Heart right ventricle (tissue), 16 donors: ENCODE measurements at regions of chr1 and their contacts with region 1.

Region 1: GRCh38 chr1:63868268-63868781 is 94.5 kb downstream of the ROR1 start:
- DNase-seq: no peak
- ATAC-seq: peak in 5 of 8 donors; percentile 40 to 65 (median 54)
- H3K4me3 ChIP-seq: no peak overlapping the region
- H3K27ac ChIP-seq: peak overlapping the region in 2 of 10 donors; percentile 2 to 18
- H3K4me1 ChIP-seq: peaks cover 0 to 55% (median 6%) of the 10 kb centered on the region in 9 donors
- H3K27me3 ChIP-seq: no peaks in the 10 kb centered on the region
- CTCF ChIP-seq: peak in 3 of 9 donors; percentile 15 to 36 (median 31)

Region 2: DNA sequence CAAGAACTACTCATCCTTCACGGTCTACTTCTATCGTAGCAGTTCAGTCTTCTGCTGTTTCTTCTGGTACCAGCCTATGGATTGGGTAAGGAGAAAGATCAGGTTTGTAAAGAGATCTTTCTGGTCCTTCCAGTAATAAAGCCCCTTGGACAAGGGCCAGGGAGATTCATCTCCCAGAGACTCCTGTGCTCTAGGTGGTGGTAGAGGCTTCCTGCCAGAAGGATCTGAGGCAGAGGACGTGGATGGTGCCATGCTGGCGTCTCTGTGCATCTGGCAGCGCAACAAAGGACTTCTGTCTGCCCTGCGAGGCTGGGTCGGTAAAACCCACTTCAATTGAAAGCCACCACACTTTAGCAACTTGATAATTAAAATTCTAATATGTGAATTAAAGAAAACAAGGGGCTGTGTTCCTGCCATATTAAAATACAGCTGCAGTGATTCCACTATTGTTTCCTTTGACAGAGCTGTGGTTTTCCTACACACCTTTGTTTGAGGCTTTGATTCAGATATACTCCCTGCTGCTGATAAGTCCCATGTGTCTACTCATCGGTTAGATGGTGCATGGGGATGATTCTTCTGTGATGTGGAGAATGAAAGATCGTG is 20.9 kb before region 1 on chr1:
- intact Hi-C with region 1: loop called in 1 of 10 experiments (anchors 1 kb)
- DNase-seq: no peak
- ATAC-seq: no peak
- H3K4me3 ChIP-seq: no peak overlapping the region
- H3K27ac ChIP-seq: no peak overlapping the region
- H3K4me1 ChIP-seq: peaks cover 0 to 50% (median 0%) of the 10 kb centered on the region in 9 donors
- H3K27me3 ChIP-seq: no peaks in the 10 kb centered on the region
- CTCF ChIP-seq: no peak

Region 3: GRCh38 chr1:63917571-63918417 is 49.5 kb after region 1 on chr1:
- intact Hi-C with region 1: loop called in 1 of 10 experiments (anchors 5 kb)
- DNase-seq: no peak
- ATAC-seq: no peak
- H3K4me3 ChIP-seq: no peak overlapping the region
- H3K27ac ChIP-seq: no peak overlapping the region
- H3K4me1 ChIP-seq: peaks cover 8 to 75% (median 42%) of the 10 kb centered on the region in 9 donors
- H3K27me3 ChIP-seq: no peaks in the 10 kb centered on the region
- CTCF ChIP-seq: peak in 2 of 9 donors; percentile 17 to 22